Right cardiac atrium (tissue), 5 donors: ENCODE measurements at regions of chr20 and their contacts with region 1.

Region 1: GRCh38 chr20:34744847-34745246 is 40.7 kb downstream of the TP53INP2 start:
- DNase-seq: no peak
- ATAC-seq: peak; percentile 77 to 85
- H3K4me3 ChIP-seq: no peak overlapping the region
- H3K27ac ChIP-seq: peak overlapping the region; percentile 71
- H3K4me1 ChIP-seq: no peaks in the 10 kb centered on the region
- H3K27me3 ChIP-seq: no peaks in the 10 kb centered on the region

Region 2: DNA sequence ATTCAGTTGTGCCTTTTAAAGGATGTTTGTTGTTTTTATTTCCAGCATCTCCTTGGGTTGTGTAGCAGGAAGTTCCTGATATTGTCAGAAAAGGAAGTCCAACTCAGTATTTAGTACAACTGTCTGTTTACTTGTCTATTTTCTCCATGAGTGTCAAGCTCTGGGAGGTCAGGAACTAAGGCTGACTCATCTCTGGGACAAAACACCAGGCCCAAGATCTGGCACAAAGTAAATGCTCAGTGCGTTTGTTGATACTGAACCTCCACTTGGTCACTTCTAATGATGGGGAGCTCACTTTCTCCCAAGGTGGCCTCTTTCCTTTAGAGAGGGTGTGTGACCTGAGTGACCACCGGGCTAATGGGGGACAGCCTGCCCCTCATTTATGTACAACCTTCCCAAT is 55.4 kb before region 1 on chr20:
- intact Hi-C with region 1: loop called in 1 of 4 experiments (anchors 10 kb)
- DNase-seq: no peak
- ATAC-seq: peak in 1 of 2 donors; percentile 47
- H3K4me3 ChIP-seq: no peak overlapping the region
- H3K27ac ChIP-seq: peak overlapping the region; percentile 43
- H3K4me1 ChIP-seq: no peaks in the 10 kb centered on the region
- H3K27me3 ChIP-seq: no peaks in the 10 kb centered on the region